Sciatic nerve (tissue), 2 donors: ENCODE measurements at regions of chr10 and their contacts with region 1.

Region 1: DNA sequence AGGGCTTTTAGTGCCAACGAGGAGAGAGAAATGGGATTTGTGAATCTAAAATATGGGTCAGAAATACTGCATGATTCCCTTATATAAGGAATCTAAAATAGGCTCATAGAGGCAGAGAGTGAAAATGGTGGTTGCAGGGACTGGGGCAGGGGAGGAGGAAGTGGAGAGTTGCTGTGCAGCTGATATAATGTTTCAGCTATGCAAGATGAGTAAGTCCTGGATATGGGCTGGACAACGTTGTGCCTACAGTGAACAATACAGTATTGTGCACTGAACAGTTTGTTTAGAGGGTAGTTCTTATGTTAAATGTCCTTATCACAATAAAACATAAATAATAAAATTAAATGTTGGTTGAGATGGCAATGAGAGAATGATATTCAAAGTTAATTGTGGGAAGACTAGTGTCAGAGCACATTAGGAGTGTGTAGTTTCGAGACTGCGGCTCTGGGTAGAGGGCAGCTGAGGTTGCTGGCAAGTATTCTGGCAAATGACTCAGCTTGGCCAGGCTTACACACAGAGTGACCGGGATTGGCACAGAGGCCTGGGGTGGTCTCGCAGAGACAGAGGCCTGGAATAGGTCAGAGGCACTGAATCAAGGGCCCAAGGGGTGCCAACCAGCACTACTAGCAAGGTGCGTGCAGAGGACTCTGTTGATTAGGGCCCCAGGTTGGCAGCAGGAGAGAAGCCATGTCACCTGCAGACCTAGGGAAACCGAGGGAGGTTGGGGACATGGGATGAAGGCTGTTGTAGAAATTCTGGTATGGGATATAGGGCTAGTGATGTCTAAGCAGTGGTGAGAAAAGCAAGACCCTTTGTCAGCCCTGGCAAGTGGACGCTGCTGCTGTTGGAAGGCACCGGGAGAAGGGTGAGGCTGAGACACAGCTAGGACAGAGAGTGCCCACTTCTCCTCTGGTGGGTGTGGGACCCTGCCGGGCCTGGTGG is 2.8 kb upstream of the DEPP1 start:
- DNase-seq: peak; percentile 62
- ATAC-seq: no peak

Region 2: GRCh38 chr10:44786286-44786850 is 195.1 kb before region 1 on chr10:
- intact Hi-C with region 1: no loop called
- DNase-seq: no peak
- ATAC-seq: no peak

Region 3: GRCh38 chr10:45000752-45001380 is 19.4 kb after region 1 on chr10 and contains the start of gene ZNF22:
- intact Hi-C with region 1: loop called (anchors 2 kb)
- DNase-seq: peak; percentile 85
- ATAC-seq: peak; percentile 58
- total RNA-seq, gene ZNF22: 24.9 TPM